ENCODE measurements at regions of chr19 and their contacts with region 1.

Region 1: GRCh38 chr19:12965017-12965811 is 4.2 kb upstream of the DAND5 start:
- DNase-seq: no peak
- H3K4me3 ChIP-seq: peak overlapping the region; percentile 63
- CTCF ChIP-seq: peak; percentile 100

Region 2: DNA sequence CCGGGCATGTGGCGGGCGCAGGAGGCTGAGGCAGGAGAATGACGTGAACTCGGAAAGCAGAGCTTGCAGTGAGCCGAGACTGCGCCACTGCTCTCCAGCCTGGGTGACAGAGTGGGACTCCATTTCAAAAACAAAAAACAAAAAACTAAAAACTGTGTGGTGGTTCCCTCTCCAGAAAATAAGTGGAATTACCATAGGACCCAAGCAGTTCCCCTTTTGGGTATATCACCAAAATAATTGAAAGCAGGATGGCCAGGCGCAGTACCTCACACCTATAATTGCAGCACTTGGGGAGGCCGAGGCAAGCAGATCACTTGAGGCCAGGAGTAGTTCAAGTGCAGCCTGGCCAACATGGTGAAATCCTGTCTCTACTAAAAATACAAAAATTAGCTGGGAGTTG is 1891.6 kb before region 1 on chr19:
- CTCF ChIA-PET with region 1: no interaction called
- POLR2A ChIA-PET with region 1: no interaction called
- DNase-seq: no peak
- H3K4me3 ChIP-seq: no peak overlapping the region
- CTCF ChIP-seq: no peak

Region 3: DNA sequence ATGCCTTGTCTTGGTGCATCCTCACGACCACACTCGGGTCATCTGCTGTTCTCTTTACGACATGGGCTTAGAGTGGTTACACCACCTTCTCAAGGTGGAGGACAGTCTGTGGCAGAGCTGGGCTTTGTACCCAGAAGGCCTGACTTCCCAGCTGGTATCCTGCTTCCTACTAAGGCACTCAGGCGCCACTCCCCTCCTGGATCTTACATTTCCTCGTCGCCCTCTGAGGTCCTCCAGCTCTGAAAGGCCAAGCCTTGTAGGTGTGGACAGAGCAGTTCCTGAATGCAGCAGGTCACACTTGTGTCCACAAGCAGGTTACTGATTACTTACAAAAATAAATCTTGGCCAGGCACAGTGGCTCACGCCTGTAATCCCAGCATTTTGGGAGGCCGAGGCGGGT is 58.0 kb before region 1 on chr19:
- CTCF ChIA-PET with region 1: no interaction called
- POLR2A ChIA-PET with region 1: no interaction called
- DNase-seq: no peak
- H3K4me3 ChIP-seq: no peak overlapping the region
- CTCF ChIP-seq: no peak

Region 4: GRCh38 chr19:12945479-12946091 is 19.6 kb before region 1 on chr19 and contains the start of gene RAD23A:
- CTCF ChIA-PET with region 1: interaction called, 29 read pairs
- POLR2A ChIA-PET with region 1: interaction called, 4 read pairs
- DNase-seq: peak; percentile 79
- H3K4me3 ChIP-seq: peak within 1 kb of the TSS; percentile 80
- CTCF ChIP-seq: no peak

Region 5: GRCh38 chr19:13060964-13061927 is 96.0 kb after region 1 on chr19:
- CTCF ChIA-PET with region 1: interaction called, 37 read pairs
- POLR2A ChIA-PET with region 1: no interaction called
- DNase-seq: no peak
- H3K4me3 ChIP-seq: peak overlapping the region; percentile 36
- CTCF ChIP-seq: peak; percentile 98

Region 6: GRCh38 chr19:13104360-13104847 is 139.2 kb after region 1 on chr19:
- CTCF ChIA-PET with region 1: interaction called, 22 read pairs
- POLR2A ChIA-PET with region 1: no interaction called
- DNase-seq: no peak
- H3K4me3 ChIP-seq: no peak overlapping the region
- CTCF ChIP-seq: peak; percentile 80

Region 7: GRCh38 chr19:13143135-13143534 is 177.9 kb after region 1 on chr19:
- CTCF ChIA-PET with region 1: interaction called, 11 read pairs
- POLR2A ChIA-PET with region 1: no interaction called
- DNase-seq: no peak
- H3K4me3 ChIP-seq: no peak overlapping the region
- CTCF ChIP-seq: no peak

Region 8: DNA sequence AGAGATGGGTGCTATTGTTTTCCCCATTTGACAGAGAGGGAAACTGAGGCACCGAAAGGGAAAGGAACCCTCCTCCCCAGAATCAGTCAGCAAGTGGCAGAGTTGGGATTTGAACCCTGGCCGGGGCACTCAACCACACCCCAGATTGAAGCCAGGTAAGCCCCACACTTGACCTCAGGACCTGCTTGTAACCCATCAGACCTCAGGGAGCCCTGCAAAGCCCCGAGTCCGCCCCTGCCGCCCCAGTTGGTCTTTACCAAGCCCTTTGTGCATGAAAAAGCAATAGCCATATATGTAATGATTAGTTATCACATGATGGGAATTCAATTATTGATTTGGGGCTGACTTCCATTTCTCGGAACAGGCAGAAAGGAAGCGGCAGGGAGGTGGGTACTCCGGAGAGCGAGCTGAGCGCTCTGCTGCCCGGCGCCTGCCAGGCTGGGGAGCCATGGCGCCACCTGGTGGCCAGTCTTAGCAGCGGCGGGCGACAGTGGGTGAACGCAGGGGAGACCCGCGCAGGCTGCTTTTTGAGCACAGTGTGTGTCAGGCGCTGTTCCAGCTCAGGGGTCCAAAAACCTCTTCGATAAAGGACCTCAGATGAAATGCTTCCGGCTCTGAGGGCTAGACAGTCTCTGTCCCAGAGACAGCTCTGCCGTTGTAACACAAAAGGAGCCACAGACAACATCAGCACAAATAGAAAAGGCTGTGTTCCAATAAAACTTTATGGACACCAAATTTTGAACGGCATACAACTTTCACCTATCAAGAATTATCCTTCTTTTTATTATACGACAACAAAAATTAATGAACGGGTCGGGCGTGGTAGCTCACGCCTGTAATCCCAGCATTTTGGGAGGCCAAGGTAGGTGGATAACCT is 624.0 kb after region 1 on chr19:
- CTCF ChIA-PET with region 1: interaction called, 10 read pairs
- POLR2A ChIA-PET with region 1: no interaction called
- DNase-seq: no peak
- H3K4me3 ChIP-seq: no peak overlapping the region; the same call in 1 of the 2 replicates
- CTCF ChIP-seq: peak; percentile 99